ENCODE measurements at regions of chr22 and their contacts with region 1.

Region 1: DNA sequence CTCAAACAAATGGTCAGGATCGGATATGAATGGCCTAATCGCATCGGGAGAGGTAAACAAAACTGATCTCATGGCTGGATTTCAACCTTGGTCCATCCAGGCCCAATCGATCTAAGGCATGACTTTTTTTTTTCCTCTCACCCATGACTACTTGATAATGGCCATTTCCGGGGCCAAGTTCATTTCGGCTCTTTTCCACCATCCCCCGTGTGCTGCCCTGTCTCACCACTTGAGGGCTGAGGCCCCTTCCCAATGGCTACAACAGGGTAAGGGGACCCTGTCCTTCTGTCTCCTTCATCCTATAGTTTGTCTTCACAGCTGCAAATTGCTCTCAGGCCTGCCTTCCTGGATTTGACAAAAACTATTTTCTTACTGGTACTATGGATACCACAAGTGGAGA is 26.7 kb downstream of the GRAP2 start:
- DNase-seq: peak; percentile 68
- ATAC-seq: peak; percentile 45
- H3K4me3 Mint-ChIP-seq: no peak overlapping the region
- H3K27ac Mint-ChIP-seq: no peak overlapping the region
- H3K4me1 Mint-ChIP-seq: peaks cover 38% of the 10 kb centered on the region
- H3K27me3 Mint-ChIP-seq: no peaks in the 10 kb centered on the region

Region 2: DNA sequence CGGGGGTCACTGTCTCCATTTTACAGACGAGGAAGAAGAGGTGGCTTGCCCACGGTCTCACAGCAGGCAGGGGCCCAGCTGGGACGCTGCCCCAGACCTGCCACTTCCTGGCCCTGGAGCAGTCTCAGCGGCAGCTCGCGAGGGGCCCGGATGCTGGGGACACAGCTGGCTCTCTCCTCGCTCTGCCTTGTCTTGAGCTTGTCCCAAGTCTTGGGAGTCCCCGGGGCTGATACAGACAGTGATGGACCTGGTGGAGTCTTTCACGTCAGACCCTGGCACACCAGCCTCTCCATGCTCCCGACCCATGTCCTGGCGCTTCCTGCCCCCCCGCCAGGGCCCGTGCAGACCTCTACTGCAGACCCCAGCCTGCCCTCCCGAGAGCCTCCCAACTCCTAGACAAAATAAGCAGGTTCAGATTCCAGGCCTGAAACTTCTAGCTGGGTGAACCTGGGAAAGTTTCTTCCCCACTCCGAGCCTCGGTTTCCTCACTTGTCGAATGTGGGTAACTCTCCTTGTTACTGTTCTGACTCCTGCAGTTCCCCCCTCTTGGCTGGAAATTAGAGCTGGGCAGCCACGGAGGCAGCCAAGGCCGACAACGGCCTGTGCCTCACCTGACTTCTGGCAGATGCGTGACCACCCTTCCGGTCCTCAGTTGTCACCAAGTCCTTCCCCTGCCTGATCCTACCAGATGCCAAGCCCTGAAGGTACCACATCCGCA is 211.6 kb before region 1 on chr22:
- CTCF ChIA-PET with region 1: no interaction called
- POLR2A ChIA-PET with region 1: interaction called, 18 read pairs
- intact Hi-C with region 1: no loop called
- DNase-seq: no peak
- ATAC-seq: no peak
- H3K4me3 Mint-ChIP-seq: no peak overlapping the region
- H3K27ac Mint-ChIP-seq: no peak overlapping the region
- H3K4me1 Mint-ChIP-seq: no peaks in the 10 kb centered on the region
- H3K27me3 Mint-ChIP-seq: no peaks in the 10 kb centered on the region

Region 3: GRCh38 chr22:39900306-39901227 is 27.0 kb before region 1 on chr22 and contains the start of gene GRAP2:
- CTCF ChIA-PET with region 1: interaction called, 23 read pairs
- POLR2A ChIA-PET with region 1: no interaction called
- intact Hi-C with region 1: loop called in 1 of 2 experiments (anchors 2 kb)
- DNase-seq: peak; percentile 77
- ATAC-seq: peak; percentile 89
- H3K4me3 Mint-ChIP-seq: peak within 1 kb of the TSS; percentile 86
- H3K27ac Mint-ChIP-seq: peak within 1 kb of the TSS; percentile 100
- H3K4me1 Mint-ChIP-seq: peaks cover 20% of the 10 kb centered on the region
- H3K27me3 Mint-ChIP-seq: no peaks in the 10 kb centered on the region
- total RNA-seq, gene GRAP2: 40.6 to 45.5 TPM

Region 4: DNA sequence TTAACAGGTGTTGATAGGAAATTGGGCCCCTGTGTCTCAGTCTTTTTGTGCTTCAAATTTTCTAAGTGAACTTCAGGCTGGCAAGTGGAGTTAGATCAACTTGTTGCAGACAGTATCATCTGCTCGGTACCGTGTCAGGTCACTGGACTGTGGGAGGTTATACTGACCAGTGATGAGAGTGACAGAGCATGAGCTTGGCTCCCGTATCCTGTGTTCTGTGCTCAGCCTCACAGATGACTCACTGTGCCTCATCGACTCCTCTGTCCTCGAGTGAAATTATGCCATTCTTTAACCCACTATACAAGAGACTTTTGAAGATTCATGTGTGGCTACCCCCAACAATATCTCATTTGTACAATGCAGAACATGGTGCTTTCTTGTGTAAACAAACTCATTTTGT is 18.8 kb before region 1 on chr22:
- CTCF ChIA-PET with region 1: interaction called, 23 read pairs
- POLR2A ChIA-PET with region 1: interaction called, 7 read pairs
- intact Hi-C with region 1: loop called in 1 of 2 experiments (anchors 2 kb)
- DNase-seq: peak; percentile 71
- ATAC-seq: peak; percentile 50
- H3K4me3 Mint-ChIP-seq: peak overlapping the region; percentile 86
- H3K27ac Mint-ChIP-seq: peak overlapping the region; percentile 100
- H3K4me1 Mint-ChIP-seq: peaks cover 75% of the 10 kb centered on the region
- H3K27me3 Mint-ChIP-seq: no peaks in the 10 kb centered on the region

Region 5: DNA sequence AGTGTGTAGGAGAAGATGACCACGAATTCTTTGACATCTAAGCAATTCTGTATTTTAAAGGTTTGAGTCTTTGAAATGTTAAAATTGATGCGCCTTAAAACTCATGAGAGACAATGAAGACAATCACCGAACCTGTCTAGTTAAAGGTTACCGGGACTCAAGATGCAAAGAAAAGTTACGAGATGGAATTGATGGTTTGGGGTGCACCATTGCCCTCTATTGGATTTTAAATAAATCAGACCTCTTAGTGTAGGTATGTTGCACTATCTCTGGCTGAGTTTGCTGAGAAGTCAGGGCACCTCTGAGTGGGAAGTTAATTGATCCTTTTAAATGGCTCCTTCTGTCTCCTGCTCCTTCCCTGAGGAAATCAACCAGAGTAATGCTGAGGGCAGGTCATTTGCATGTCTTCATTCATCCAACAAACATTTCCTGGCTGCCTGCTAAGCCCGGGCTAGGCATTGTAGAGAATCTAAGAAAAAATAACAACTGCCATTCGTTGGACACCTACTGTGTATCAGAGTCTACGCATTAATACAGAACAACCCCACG is 13.3 kb after region 1 on chr22:
- CTCF ChIA-PET with region 1: interaction called, 53 read pairs
- POLR2A ChIA-PET with region 1: interaction called, 9 read pairs
- intact Hi-C with region 1: no loop called
- DNase-seq: no peak
- ATAC-seq: peak; percentile 39
- H3K4me3 Mint-ChIP-seq: peak overlapping the region; percentile 21
- H3K27ac Mint-ChIP-seq: peak overlapping the region; percentile 70
- H3K4me1 Mint-ChIP-seq: peaks cover 94% of the 10 kb centered on the region
- H3K27me3 Mint-ChIP-seq: no peaks in the 10 kb centered on the region

Region 6: GRCh38 chr22:39946503-39947219 is 19.1 kb after region 1 on chr22:
- CTCF ChIA-PET with region 1: interaction called, 25 read pairs
- POLR2A ChIA-PET with region 1: interaction called, 3 read pairs
- intact Hi-C with region 1: no loop called
- DNase-seq: no peak
- ATAC-seq: peak; percentile 27
- H3K4me3 Mint-ChIP-seq: peak overlapping the region; percentile 50
- H3K27ac Mint-ChIP-seq: peak overlapping the region; percentile 89
- H3K4me1 Mint-ChIP-seq: peaks cover 96% of the 10 kb centered on the region
- H3K27me3 Mint-ChIP-seq: no peaks in the 10 kb centered on the region

Region 7: GRCh38 chr22:39954584-39955055 is 27.1 kb after region 1 on chr22:
- CTCF ChIA-PET with region 1: interaction called, 10 read pairs
- POLR2A ChIA-PET with region 1: no interaction called
- intact Hi-C with region 1: no loop called
- DNase-seq: peak; percentile 53
- ATAC-seq: peak; percentile 40
- H3K4me3 Mint-ChIP-seq: no peak overlapping the region
- H3K27ac Mint-ChIP-seq: no peak overlapping the region
- H3K4me1 Mint-ChIP-seq: peaks cover 90% of the 10 kb centered on the region
- H3K27me3 Mint-ChIP-seq: no peaks in the 10 kb centered on the region

Region 8: DNA sequence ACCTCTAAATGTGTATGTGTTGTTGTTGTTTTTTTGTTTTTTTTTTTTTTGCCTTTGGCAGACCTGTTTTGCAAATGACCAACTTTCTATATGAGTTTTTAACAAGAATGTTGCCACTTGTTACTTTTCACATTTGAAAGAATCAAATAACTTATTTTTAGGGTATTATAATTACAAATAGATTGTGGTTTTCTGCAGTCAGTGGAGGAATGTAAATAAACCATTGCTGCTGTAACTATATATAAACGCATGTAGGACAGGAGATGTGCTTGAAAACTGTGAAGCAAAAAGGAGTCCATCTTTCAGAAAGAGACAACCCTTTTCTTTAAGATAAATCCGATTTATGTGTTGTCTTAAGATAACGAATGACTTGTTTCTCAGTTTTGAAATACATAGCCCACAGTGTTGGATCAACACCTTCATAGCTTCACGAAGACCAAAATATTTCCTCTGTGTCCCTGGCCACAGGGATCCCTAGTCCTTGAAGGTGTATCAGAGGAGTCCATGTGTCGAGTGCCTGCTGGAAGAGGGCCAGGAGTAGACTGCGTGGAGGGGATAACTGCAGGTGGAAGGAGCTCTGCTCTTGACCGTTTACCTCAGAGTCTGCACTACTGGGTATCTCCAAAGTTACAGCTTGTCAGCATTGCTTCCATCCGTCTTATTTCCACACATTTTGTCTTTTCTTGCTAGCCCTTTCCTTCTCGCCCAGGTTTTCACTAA is 274.8 kb after region 1 on chr22:
- CTCF ChIA-PET with region 1: no interaction called
- POLR2A ChIA-PET with region 1: no interaction called
- intact Hi-C with region 1: no loop called
- DNase-seq: no peak
- ATAC-seq: no peak
- H3K4me3 Mint-ChIP-seq: peak overlapping the region; percentile 63
- H3K27ac Mint-ChIP-seq: peak overlapping the region; percentile 94
- H3K4me1 Mint-ChIP-seq: peaks cover 65% of the 10 kb centered on the region
- H3K27me3 Mint-ChIP-seq: no peaks in the 10 kb centered on the region

Measured in activated CD4-positive, alpha-beta T cell treated with anti-CD3 and anti-CD28 coated beads for 36 hours (primary cell).